ENCODE measurements at regions of chr9 and their contacts with region 1.

Region 1: DNA sequence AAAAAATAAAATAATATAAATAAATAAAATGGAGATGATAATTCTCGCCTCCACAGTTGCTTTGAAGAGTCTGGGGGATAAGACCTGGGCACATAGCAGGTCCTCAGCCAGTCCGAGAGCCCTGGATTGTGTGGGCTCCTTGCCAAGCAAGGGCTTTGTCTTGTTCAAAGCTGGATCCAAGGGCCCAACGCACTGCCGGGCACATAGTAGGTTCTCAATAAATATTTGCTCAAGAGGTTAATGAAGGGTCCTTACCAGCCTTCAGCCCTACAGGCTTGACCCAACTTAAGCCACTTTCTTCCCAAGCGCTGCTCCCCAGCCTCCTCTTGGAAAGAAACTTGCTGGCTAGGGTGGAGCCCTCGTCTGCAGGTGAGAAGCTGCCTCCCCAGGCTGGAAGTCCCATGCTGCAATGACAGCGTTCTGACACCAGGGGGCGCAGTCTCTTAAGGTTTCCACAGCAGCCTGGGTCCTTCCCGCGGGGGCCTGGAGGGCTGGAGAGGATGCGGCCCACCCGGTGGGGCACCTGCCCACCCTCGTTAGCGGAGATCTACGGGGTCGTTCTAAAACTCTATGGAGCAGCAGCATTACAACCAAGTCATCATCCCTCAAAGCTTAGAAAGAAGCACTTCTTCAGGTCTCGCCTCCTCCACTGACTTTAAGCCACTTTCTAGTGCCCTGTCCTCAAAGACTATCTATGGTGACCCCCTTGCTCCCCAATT is 115.2 kb downstream of the LHX2 start:
- DNase-seq: peak; percentile 79
- H3K4me3 Mint-ChIP-seq: no peak overlapping the region
- H3K27ac Mint-ChIP-seq: no peak overlapping the region
- H3K4me1 Mint-ChIP-seq: no peaks in the 10 kb centered on the region
- H3K27me3 Mint-ChIP-seq: peaks cover 33% of the 10 kb centered on the region
- CTCF ChIP-seq: peak; percentile 96

Region 2: DNA sequence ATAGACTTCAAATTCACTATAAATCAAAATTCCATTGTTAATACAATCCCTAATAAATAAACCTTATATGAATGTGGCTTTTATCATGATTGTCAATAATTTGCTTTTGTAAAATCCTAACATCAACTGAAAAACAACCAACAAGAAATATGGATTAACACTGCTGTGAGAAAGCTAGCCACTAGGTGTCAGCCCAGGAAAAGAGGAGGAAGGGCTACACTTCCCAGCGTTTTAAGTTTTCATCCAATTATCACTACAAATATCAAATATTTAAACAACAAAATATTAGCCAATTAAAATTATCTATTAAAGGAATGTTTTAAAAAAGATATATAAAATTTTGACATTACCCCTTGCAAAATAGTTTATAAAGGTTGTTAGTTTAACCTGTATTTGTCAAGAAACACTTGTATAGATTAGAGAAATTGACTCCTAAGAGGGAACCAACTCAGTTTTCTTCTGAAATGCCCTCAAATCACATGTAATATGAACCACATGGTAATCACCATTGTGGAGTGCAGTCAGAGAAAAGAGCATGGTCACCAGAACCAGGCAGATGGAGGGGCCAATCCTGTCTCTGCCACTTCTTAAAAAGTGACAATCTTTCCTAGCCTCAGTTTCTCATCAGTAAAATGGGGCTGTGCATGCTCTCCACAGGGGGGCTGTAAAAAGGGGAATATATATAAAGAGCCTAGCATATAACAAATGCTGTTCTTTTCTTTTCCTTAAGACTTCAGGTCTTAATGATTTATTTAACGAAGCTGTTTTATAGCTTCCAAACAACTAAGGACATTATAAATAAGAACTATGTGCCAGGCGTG is 582.5 kb before region 1 on chr9:
- CTCF ChIA-PET with region 1: interaction called, 4 read pairs
- POLR2A ChIA-PET with region 1: no interaction called
- intact Hi-C with region 1: loop called (anchors 5 kb)
- DNase-seq: peak; percentile 53
- H3K4me3 Mint-ChIP-seq: no peak overlapping the region
- H3K27ac Mint-ChIP-seq: no peak overlapping the region
- H3K4me1 Mint-ChIP-seq: no peaks in the 10 kb centered on the region
- H3K27me3 Mint-ChIP-seq: no peaks in the 10 kb centered on the region
- CTCF ChIP-seq: peak; percentile 76

Region 3: DNA sequence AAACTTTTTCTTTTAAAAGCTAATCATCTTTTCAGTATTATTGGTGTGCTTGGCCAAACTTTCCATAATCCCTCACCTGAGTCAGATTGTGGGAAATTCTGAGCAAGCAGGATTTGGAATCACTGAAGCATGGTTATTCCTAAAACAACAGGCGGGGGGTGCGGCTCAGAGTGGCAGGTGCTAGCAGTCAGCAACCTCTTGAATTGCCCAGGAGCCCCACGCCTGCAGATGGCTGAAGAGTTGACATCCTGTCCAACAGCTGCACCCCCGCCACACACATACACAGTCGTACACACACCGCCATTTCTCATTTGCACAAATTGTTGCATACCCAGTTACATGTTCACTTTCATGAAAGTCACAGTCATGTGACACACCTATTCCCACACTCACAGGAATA is 18.5 kb before region 1 on chr9:
- CTCF ChIA-PET with region 1: interaction called, 11 read pairs
- POLR2A ChIA-PET with region 1: interaction called, 4 read pairs
- intact Hi-C with region 1: no loop called
- DNase-seq: no peak
- H3K4me3 Mint-ChIP-seq: no peak overlapping the region
- H3K27ac Mint-ChIP-seq: no peak overlapping the region
- H3K4me1 Mint-ChIP-seq: no peaks in the 10 kb centered on the region
- H3K27me3 Mint-ChIP-seq: peaks cover 29% of the 10 kb centered on the region
- CTCF ChIP-seq: no peak

Region 4: DNA sequence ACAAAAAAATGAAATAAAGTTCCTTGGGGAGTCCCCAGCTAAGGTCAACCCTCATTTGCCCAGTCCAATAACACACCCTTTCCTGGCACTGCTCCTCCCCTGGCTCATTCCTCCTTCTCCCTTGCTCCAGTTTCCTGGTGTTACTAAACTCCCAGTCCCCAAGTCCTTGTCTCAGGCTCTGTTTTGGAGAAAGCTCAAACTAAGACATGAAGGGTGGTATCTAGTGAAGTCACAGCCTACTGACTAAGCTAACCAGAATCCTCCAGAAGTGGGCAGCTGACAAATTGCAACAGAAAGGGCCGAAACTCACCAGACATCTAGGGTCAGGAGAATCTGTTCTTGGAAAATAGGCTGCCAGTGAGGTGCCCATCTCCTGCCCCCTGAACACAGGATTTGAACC is 12.3 kb after region 1 on chr9:
- CTCF ChIA-PET with region 1: interaction called, 32 read pairs
- POLR2A ChIA-PET with region 1: no interaction called
- intact Hi-C with region 1: no loop called
- DNase-seq: peak; percentile 11
- H3K4me3 Mint-ChIP-seq: no peak overlapping the region
- H3K27ac Mint-ChIP-seq: no peak overlapping the region
- H3K4me1 Mint-ChIP-seq: peaks cover 6% of the 10 kb centered on the region
- H3K27me3 Mint-ChIP-seq: peaks cover 14% of the 10 kb centered on the region
- CTCF ChIP-seq: no peak

Region 5: GRCh38 chr9:124320062-124320973 is 193.6 kb after region 1 on chr9:
- CTCF ChIA-PET with region 1: interaction called, 10 read pairs
- POLR2A ChIA-PET with region 1: no interaction called
- intact Hi-C with region 1: loop called (anchors 1 kb)
- DNase-seq: peak; percentile 69
- H3K4me3 Mint-ChIP-seq: no peak overlapping the region
- H3K27ac Mint-ChIP-seq: no peak overlapping the region
- H3K4me1 Mint-ChIP-seq: no peaks in the 10 kb centered on the region
- H3K27me3 Mint-ChIP-seq: no peaks in the 10 kb centered on the region
- CTCF ChIP-seq: peak; percentile 82

Region 6: DNA sequence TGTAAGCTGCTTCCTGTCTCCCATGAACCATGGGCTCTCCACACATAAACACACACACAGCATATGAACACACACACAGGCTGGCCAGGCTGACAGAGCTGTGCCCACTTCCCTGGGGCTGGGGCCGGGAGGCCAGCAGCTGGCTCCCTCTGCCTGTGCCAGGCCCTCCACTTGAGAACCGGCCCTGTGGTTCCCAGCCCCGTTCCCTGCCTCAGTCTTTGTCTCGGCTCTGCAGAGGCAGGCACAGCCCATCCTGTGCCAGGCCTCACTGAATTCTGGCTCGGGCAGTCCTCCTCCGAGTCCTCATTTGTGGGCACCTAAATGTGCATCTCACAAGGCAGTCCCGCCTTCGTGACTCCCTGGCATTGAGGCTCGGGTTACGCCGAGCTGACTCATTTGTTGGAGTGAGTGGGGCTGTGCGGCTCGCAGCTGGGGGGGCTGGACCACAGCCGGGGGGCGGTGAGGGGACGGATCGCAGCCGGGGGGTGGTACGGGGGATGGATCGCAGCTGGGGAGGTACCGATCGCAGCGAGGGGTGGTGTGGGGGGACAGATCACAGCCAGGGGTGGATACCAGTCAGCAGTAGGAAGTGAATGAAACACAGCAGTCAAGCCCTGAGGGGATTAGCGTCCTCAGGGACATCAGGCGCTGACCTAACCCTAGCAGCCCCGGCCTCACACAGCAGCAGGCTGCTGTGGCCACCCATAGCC is 216.2 kb after region 1 on chr9:
- CTCF ChIA-PET with region 1: interaction called, 4 read pairs
- POLR2A ChIA-PET with region 1: no interaction called
- intact Hi-C with region 1: loop called (anchors 2 kb)
- DNase-seq: peak; percentile 90
- H3K4me3 Mint-ChIP-seq: no peak overlapping the region
- H3K27ac Mint-ChIP-seq: peak overlapping the region; percentile 58
- H3K4me1 Mint-ChIP-seq: peaks cover 8% of the 10 kb centered on the region
- H3K27me3 Mint-ChIP-seq: no peaks in the 10 kb centered on the region
- CTCF ChIP-seq: no peak

Region 7: DNA sequence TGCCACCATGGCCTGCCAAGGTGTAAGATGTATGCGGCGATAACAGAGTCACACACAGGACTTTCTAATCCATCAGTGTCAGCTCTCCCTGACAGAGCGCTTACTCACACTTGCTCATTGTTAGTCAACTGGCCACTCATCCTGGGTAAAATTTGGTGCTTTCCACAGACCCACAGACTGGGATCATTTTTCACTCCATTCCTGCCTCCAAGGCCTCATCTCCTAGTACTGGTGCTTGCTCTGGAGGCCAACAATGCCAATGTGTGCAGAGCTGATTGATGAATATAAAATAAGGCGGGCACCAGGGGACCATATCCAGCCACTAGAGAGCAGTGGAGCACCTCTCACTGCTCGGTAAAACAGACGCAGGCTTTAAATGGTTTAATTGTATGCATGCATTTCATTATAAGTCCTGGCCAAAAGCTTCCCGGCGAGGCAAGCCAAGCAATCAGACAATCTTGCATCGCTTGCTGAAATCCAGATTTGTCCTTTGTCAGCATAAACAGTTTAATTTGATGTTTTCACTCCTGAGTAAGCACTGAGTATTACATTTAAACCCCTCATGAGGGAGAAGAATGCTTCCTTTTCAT is 266.2 kb after region 1 on chr9:
- CTCF ChIA-PET with region 1: interaction called, 12 read pairs
- POLR2A ChIA-PET with region 1: no interaction called
- intact Hi-C with region 1: loop called (anchors 10 kb)
- DNase-seq: peak; percentile 95
- H3K4me3 Mint-ChIP-seq: peak overlapping the region; percentile 22
- H3K27ac Mint-ChIP-seq: no peak overlapping the region
- H3K4me1 Mint-ChIP-seq: peaks cover 50% of the 10 kb centered on the region
- H3K27me3 Mint-ChIP-seq: no peaks in the 10 kb centered on the region
- CTCF ChIP-seq: peak; percentile 17

Measured in MCF 10A (cell line).